ENCODE measurements at regions of chr9 and their contacts with region 1.

Region 1: GRCh38 chr9:100714372-100715099 is 136.7 kb downstream of the CAVIN4 start:
- DNase-seq: peak; percentile 66
- H3K4me3 ChIP-seq: no peak overlapping the region
- H3K27ac ChIP-seq: no peak overlapping the region
- H3K4me1 ChIP-seq: no peaks in the 10 kb centered on the region
- H3K27me3 ChIP-seq: no peaks in the 10 kb centered on the region
- CTCF ChIP-seq: peak; percentile 83

Region 2: DNA sequence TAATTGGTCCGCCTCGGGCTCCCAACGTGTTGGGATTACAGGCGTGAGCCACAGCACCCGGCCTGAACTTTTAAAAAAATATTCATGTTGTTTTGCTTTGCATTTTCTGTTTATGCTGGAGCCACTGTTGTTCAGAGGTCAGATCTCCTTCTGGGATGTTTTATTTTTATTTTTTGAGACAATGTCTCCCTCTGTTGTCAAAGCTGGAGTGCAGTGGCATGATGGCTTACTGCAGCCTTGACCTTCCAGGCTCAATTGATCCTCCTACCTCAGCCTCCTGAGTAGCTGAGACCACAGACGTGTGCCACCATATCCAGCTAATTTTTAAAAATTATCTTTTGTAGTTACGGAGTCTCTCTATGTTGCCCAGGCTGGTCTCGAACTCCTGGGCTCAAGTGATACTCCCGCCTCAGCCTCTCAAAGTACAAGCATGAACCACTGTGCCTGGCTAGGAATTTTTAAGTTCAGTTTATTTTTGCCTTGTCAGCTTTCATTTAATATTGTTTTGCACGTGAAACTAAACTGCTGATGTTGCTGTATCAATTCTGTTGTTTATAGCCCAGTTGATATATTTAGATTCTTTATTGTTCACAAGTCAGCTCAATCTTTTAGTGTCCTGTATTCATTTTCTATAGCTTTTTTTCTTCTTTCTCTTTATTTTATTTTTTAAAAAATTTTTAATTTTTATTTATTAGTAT is 227.9 kb before region 1 on chr9:
- intact Hi-C with region 1: no loop called
- DNase-seq: no peak
- H3K4me3 ChIP-seq: no peak overlapping the region
- H3K27ac ChIP-seq: no peak overlapping the region
- H3K4me1 ChIP-seq: no peaks in the 10 kb centered on the region
- H3K27me3 ChIP-seq: no peaks in the 10 kb centered on the region
- CTCF ChIP-seq: no peak

Region 3: DNA sequence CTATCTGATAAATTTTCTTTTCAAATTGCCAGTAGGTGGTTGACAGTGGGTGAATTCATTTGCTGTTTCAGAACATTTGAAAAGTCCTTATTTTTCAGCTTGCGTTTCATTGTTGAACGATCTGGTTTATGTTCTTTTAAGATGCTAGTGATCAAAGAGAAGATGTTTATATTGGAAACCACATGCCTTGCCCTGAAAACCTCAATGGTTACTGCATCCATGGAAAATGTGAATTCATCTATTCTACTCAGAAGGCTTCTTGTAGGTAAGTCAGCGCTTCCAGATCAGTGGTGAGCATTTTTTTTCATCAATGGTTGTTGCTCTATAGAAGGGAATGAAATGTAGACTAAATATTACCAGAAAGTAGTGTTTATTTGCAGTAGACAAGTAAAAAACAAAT is 153.3 kb before region 1 on chr9:
- intact Hi-C with region 1: no loop called
- DNase-seq: no peak
- H3K4me3 ChIP-seq: no peak overlapping the region
- H3K27ac ChIP-seq: no peak overlapping the region
- H3K4me1 ChIP-seq: no peaks in the 10 kb centered on the region
- H3K27me3 ChIP-seq: no peaks in the 10 kb centered on the region
- CTCF ChIP-seq: no peak

Region 4: GRCh38 chr9:101119206-101119819 is 404.8 kb after region 1 on chr9:
- intact Hi-C with region 1: loop called (anchors 10 kb)
- DNase-seq: peak; percentile 59
- H3K4me3 ChIP-seq: no peak overlapping the region
- H3K27ac ChIP-seq: no peak overlapping the region
- H3K4me1 ChIP-seq: no peaks in the 10 kb centered on the region
- H3K27me3 ChIP-seq: no peaks in the 10 kb centered on the region
- CTCF ChIP-seq: peak; percentile 68

Region 5: GRCh38 chr9:101229606-101230005 is 515.1 kb after region 1 on chr9:
- intact Hi-C with region 1: loop called (anchors 5 kb)
- DNase-seq: no peak
- H3K4me3 ChIP-seq: no peak overlapping the region
- H3K27ac ChIP-seq: no peak overlapping the region
- H3K4me1 ChIP-seq: no peaks in the 10 kb centered on the region
- H3K27me3 ChIP-seq: no peaks in the 10 kb centered on the region
- CTCF ChIP-seq: no peak

Region 6: GRCh38 chr9:101398068-101398929 is 683.8 kb after region 1 on chr9 and contains the starts of genes MRPL50 and ZNF189:
- intact Hi-C with region 1: loop called (anchors 10 kb)
- DNase-seq: peak; percentile 99
- H3K4me3 ChIP-seq: peak within 1 kb of the TSS; percentile 66
- H3K27ac ChIP-seq: peak within 1 kb of the TSS; percentile 73
- H3K4me1 ChIP-seq: no peaks in the 10 kb centered on the region
- H3K27me3 ChIP-seq: no peaks in the 10 kb centered on the region
- CTCF ChIP-seq: no peak
- total RNA-seq, gene MRPL50: 9.5 to 10.1 TPM
- total RNA-seq, gene ZNF189: 9.3 to 17.4 TPM

Measured in colonic mucosa (tissue), 4 donors.